AG04449 (cell line): ENCODE measurements at regions of chr17 and their contacts with region 1.

Region 1: GRCh38 chr17:7561028-7561575 is 617 bp upstream of the SENP3 start:
- DNase-seq: peak; percentile 23
- H3K4me3 ChIP-seq: peak overlapping the region; percentile 84
- CTCF ChIP-seq: peak; percentile 92

Region 2: GRCh38 chr17:6721744-6722143 is 839.4 kb before region 1 on chr17:
- CTCF ChIA-PET with region 1: no interaction called
- POLR2A ChIA-PET with region 1: no interaction called
- DNase-seq: no peak
- H3K4me3 ChIP-seq: no peak overlapping the region
- CTCF ChIP-seq: no peak

Region 3: DNA sequence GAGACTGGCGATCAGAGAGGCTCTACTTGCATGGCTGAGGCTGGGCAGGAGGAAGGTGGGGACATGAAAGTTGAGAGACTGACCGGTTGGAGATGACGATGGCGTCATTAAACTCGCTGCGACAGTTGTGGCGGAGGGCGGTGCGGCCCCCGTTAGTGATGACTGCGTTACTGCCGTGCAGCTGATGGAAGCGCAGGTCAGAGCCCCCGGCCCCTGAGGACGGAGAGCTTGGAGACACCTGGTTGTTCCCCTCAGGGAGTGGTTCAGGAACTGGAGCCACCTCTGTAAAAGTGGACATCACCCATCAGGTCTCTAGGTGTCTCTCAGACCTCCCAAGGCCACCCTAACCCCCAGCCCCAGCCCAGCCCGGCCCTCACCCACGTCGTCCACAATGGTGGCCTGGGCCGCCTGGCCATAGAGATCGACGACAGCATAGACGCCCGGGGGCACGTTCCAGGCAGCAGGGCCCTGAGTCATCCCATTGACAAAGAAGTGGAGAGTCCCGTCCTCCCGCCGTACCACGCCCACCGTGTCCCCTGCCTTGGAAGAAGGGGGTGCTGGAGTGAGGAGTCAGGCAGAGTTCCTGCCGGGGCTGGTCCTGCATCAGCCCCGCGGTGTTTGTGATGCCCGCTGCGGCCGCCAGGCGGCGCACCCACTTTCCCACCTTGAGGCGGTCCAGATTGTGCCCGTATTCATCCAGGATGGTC is 237.2 kb before region 1 on chr17:
- CTCF ChIA-PET with region 1: interaction called, 20 read pairs
- POLR2A ChIA-PET with region 1: interaction called, 3 read pairs
- DNase-seq: no peak
- H3K4me3 ChIP-seq: no peak overlapping the region
- CTCF ChIP-seq: peak; percentile 89

Region 4: DNA sequence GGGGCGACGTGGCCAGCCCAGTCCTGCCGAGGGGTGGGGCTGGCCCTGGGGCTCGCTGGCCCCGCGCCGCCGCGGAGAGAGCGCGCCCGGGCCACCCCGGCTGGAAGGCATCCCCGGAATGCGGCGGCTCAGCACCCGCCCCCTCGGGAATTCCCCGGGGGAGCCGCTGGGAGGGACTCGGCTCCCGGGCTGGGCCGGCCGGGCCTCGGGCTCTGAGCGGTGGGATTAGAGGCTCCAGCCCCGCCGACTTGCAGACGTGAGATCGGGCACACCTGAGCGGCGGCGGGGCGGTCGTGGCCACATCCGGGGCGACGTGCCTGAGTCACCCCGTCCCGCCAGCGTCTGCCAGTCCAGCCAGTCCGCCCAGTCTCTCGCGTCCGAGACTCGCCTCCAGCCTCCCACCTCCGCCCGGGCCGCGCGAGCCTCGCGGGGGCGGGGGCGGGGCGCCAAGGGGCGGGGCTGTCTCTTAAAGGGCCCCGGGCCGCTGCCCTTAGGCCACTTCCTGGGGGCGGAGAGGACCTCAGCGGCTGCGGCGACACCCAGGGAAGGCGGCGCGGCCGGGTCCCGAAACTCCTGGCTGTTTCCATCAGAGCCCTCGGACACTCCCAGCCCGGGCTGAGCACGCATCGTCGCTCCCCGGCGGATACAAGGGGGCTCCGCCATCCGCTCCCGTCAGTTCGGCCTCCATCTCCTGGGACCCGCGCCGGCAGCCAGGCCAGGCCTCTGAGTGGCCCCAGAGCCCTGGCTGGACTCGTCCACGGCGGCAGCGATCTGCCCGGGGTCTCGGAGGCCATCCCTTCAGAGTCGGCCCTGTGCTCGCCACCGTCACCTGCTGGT is 209.2 kb before region 1 on chr17 and contains the start of gene KCTD11:
- CTCF ChIA-PET with region 1: interaction called, 67 read pairs
- POLR2A ChIA-PET with region 1: interaction called, 4 read pairs
- DNase-seq: peak; percentile 62
- H3K4me3 ChIP-seq: peak within 1 kb of the TSS; percentile 96
- CTCF ChIP-seq: peak; percentile 75

Region 5: DNA sequence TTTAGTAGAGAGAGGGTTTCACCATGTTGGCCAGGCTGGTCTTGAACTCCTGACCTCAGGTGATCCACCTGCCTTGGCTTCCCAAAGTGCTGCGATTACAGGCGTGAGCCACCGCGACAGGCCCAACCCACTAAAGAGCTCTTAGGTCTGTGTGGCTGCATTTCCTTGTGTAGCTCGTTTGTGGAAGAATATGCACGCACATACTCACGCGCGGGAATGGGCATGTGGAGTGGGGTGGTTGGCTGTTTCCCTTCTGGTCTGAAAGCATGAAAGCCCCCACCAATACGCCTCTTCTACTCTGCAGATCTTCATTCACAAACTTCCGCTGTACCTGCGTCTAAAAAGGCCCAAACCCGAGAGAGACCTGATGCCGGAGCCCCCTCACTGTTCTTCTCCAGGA is 106.1 kb before region 1 on chr17:
- CTCF ChIA-PET with region 1: no interaction called
- POLR2A ChIA-PET with region 1: no interaction called
- DNase-seq: no peak
- H3K4me3 ChIP-seq: peak overlapping the region; percentile 83
- CTCF ChIP-seq: no peak

Region 6: GRCh38 chr17:7484067-7484918 is 76.8 kb before region 1 on chr17 and contains the start of gene POLR2A:
- CTCF ChIA-PET with region 1: interaction called, 27 read pairs
- POLR2A ChIA-PET with region 1: interaction called, 9 read pairs
- DNase-seq: peak; percentile 87
- H3K4me3 ChIP-seq: peak within 1 kb of the TSS; percentile 87
- CTCF ChIP-seq: no peak

Region 7: DNA sequence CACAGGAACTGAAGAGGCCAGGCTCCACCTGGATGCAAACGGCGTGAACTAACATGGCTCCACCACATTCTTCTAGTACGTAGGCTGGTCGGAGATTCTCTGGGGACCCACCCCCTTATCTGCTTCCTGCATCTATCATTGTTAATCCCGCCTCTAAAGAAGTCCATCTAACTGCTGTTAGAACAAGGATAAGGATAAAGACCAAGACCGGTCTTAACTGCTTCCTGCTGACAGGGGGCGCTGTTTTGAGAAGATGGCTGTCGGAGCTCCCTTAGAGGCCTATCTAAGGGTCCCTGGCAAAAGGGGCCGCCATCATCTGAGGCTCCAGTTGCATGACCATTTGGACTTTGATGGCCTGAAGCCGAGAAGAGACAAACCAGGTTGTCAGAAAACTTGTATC is 38.1 kb before region 1 on chr17:
- CTCF ChIA-PET with region 1: interaction called, 55 read pairs
- POLR2A ChIA-PET with region 1: no interaction called
- DNase-seq: no peak
- H3K4me3 ChIP-seq: no peak overlapping the region
- CTCF ChIP-seq: peak; percentile 2

Region 8: DNA sequence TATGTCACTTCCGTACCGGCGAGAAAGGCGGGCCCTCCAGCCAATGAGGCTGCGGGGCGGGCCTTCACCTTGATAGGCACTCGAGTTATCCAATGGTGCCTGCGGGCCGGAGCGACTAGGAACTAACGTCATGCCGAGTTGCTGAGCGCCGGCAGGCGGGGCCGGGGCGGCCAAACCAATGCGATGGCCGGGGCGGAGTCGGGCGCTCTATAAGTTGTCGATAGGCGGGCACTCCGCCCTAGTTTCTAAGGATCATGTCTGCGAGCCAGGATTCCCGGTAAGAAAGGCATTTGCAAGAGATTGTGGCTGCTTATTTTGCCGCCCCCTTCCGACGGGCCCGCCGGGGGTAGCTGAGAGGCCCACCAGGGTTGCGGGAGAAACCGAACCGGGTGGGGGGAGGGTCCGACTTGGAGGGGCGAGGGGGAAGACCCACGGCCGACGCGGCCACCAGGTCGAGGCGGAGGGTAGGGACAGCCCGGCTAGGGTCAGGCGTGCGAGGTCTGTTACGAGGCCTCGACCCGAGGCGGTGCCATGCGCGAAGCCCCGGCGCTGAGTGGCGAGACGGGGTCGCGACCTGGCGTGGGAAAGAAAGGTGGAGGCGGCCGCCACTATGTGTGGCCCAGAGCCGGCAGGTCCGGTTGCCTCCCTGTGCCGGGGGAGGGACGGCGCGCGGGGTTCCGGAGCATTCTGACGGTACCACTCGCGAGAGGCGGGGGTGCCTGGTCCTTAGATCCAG is 11.7 kb after region 1 on chr17:
- CTCF ChIA-PET with region 1: interaction called, 54 read pairs
- POLR2A ChIA-PET with region 1: interaction called, 13 read pairs
- DNase-seq: no peak
- H3K4me3 ChIP-seq: peak overlapping the region; percentile 100
- CTCF ChIP-seq: no peak

Region 9: DNA sequence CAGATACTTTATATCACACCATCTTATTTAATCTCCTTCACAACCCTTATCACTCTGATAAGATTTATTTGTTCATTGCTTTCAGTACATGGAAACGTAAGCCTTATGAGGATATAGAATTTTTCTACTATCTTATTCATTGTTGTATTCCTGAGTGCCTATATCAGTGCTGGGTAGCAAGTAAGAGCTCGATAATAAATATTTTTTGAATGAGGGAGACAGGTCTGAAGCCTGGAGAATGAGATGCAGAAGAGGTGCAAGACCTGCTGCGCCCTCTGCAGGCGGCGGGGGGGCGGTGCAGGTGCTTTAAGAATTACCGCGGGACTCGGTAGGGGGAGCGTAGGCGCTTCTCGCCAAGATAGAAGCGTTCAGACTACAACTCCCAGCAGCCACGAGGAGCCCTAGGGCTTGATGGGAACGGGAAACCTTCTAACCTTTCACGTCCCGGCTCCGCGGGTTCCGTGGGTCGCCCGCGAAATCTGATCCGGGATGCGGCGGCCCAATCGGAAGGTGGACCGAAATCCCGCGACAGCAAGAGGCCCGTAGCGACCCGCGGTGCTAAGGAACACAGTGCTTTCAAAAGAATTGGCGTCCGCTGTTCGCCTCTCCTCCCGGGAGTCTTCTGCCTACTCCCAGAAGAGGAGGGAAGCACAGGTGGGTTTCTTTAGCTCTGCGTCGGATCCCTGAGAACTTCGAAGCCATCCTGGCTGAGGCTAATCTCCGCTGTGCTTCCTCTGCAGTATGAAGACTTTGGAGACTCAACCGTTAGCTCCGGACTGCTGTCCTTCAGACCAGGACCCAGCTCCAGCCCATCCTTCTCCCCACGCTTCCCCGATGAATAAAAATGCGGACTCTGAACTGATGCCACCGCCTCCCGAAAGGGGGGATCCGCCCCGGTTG is 127.1 kb after region 1 on chr17 and contains the start of gene WRAP53:
- CTCF ChIA-PET with region 1: interaction called, 22 read pairs
- POLR2A ChIA-PET with region 1: interaction called, 4 read pairs
- DNase-seq: peak; percentile 94
- H3K4me3 ChIP-seq: peak within 1 kb of the TSS; percentile 99
- CTCF ChIP-seq: peak; percentile 94

Region 10: GRCh38 chr17:7716901-7717755 is 156.0 kb after region 1 on chr17 and contains the start of gene DNAH2:
- CTCF ChIA-PET with region 1: no interaction called
- POLR2A ChIA-PET with region 1: no interaction called
- DNase-seq: peak; percentile 24
- H3K4me3 ChIP-seq: peak within 1 kb of the TSS; percentile 71
- CTCF ChIP-seq: peak; percentile 69

Region 11: DNA sequence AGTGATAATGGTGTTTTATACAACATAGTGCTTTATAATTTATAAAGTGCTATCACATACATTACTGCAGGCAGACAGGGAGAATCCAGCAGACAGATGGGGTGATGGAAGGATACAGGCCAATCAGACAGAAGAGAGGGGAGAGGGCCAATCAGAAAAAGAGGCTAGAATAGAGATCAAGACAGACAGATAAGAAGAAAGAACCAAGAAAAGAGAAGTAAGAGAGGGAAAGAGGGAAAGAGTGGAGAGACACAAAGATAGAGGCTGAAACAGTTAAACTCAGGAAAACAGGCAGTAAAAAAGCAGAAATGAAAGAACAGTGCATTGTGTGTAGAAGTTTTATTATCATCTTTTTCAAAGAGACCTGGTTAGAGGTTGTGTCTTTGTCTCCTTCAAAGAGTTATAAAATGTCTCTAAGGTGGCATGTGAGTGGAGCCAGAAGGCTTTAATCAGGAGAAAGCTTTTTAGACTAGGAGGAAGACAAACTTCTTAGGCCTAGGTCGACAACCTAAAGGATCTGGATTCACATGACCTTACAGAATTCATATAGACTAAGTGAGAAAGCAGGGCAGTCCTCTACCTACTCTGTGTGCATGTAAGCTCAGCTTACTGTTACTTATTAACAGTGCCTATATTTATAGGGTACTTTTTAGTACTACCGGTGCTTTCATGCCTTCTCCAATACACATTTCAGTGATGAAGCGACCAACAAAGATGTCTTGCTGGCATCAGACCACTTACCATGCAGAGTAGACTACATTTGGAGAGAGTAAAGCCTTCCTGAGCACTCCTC is 319.2 kb after region 1 on chr17:
- CTCF ChIA-PET with region 1: no interaction called
- POLR2A ChIA-PET with region 1: no interaction called
- DNase-seq: no peak
- H3K4me3 ChIP-seq: no peak overlapping the region
- CTCF ChIP-seq: no peak